Pancreas (tissue), 10 donors: ENCODE measurements at regions of chr16 and their contacts with region 1.

Region 1: DNA sequence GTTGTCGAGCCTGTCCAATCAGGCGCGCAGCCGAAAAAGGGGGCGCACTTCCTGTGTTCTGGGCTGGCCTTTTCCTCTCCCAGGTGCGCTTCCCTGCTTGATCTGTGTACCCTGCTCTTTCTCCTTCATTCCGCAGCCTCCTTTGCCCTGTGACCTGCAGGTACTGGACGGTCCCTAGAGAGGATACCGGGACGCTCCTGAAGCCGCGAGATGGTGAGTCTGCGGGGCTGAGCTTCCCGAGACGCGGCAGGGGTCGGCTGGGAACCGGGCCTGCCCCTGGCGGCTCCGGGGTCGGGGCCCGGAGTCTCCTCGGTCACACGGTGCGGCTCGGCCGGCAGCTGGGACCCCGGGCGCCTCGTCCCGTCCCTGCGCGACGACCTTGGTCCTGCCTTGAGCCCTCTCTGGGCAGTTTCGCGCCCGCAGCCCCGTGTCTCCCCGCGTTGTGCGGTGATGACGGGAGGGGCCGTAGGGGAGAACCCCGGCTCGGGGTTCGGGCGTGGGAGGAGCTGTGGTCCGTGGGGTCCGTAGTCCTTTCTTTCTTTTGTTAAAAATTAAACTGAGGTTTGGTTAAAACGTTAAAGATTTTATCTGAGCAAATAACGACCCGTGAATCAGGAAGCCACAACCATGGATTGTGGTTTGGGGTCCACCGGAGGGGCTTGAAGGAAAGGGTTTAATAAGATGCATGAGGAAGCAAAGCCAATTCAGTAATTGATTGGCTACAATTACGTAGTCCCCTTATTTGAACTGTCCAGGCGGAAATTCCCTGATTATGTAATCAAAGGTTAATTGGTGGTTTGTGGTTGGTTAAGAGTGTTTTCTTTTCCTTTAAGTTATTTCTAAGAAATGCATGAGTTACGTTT is 172.8 kb upstream of the ZNF267 start:
- DNase-seq: peak; percentile 84 to 92 (median 88)
- ATAC-seq: peak; percentile 96 to 99 (median 99)
- H3K4me3 ChIP-seq: peak overlapping the region; percentile 72 to 96 (median 81)
- H3K27ac ChIP-seq: peak overlapping the region; percentile 47 to 79 (median 66)
- H3K4me1 ChIP-seq: peaks cover 0 to 8% (median 7%) of the 10 kb centered on the region in 3 donors
- H3K27me3 ChIP-seq: no peaks in the 10 kb centered on the region
- CTCF ChIP-seq: no peak

Region 2: GRCh38 chr16:31458844-31459721 is 241.7 kb before region 1 on chr16 and contains the start of gene ARMC5:
- intact Hi-C with region 1: no loop called
- DNase-seq: peak; percentile 94 to 99 (median 98)
- ATAC-seq: peak; percentile 83 to 91 (median 85)
- H3K4me3 ChIP-seq: peak within 1 kb of the TSS; percentile 75 to 77 (median 75)
- H3K27ac ChIP-seq: peak within 1 kb of the TSS; percentile 100
- H3K4me1 ChIP-seq: peaks cover 14 to 38% (median 22%) of the 10 kb centered on the region in 3 donors
- H3K27me3 ChIP-seq: no peaks in the 10 kb centered on the region
- CTCF ChIP-seq: peak in 3 of 4 donors; percentile 21 to 24 (median 22)
- total RNA-seq, gene ARMC5: 2.3 to 6.2 (median 4.3) TPM

Region 3: DNA sequence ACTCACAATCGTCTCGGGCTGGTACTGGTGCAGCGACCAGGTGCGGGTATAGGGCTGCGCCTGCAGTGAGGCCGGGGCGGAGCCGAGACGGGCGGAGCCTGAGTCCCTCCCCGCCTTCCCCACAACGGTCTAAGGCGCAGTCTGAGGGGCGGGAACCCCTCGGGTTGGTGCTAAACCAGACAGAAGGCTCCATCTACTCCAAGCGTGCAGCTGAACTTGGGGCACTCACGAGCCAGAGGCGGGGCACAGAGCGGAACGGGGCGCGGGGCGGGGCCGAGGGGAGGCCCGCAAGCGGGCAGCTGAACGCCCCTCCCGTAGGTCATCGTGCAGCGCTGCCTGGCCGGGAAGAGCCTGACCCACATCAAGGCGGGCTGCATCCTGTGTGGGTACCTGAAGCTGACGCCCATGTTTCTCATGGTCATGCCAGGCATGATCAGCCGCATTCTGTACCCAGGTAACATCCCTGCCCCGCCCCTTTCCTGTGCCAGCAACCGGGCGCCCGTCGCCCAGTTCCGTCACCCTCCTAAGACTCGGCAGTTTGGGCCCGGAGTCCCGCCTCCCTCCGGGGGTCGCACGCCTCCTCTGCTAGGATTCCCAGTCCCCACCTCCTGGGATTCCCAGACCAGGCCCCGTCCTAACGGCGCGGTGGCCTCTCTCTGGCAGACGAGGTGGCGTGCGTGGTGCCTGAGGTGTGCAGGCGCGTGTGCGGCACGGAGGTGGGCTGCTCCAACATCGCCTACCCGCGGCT is 212.9 kb before region 1 on chr16:
- intact Hi-C with region 1: loop called in 1 of 3 experiments (anchors 10 kb)
- DNase-seq: peak; percentile 47 to 89 (median 68)
- ATAC-seq: peak; percentile 68 to 86 (median 84)
- H3K4me3 ChIP-seq: peak overlapping the region; percentile 29 to 75 (median 43)
- H3K27ac ChIP-seq: peak overlapping the region in 1 of 4 donors; percentile 8
- H3K4me1 ChIP-seq: peaks cover 5 to 11% (median 7%) of the 10 kb centered on the region in 3 donors
- H3K27me3 ChIP-seq: no peaks in the 10 kb centered on the region
- CTCF ChIP-seq: no peak

Region 4: GRCh38 chr16:31641279-31641678 is 59.5 kb before region 1 on chr16:
- intact Hi-C with region 1: no loop called
- DNase-seq: no peak
- ATAC-seq: no peak
- H3K4me3 ChIP-seq: no peak overlapping the region
- H3K27ac ChIP-seq: no peak overlapping the region
- H3K4me1 ChIP-seq: no peaks in the 10 kb centered on the region
- H3K27me3 ChIP-seq: peaks cover 0 to 13% (median 0%) of the 10 kb centered on the region in 4 donors
- CTCF ChIP-seq: no peak

Region 5: DNA sequence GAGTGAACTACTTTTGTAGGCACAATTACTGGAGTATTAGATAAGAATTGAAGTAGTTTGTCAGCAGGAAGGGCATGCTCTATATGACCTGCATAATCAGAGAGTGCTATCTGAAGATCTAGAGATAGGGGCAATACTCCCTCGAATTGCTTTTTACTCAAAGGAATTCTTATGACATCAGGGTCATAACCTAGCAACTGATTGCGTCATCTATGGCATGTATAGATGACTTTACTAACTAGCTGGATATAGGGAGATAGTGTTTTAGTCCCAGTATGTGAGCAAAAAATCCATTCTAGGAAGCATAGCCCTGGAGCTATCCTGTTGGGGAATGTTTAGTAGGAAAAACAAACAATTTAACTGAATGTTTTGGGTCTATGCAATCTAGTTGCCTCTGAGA is 63.3 kb after region 1 on chr16:
- intact Hi-C with region 1: no loop called
- DNase-seq: no peak
- ATAC-seq: no peak
- H3K4me3 ChIP-seq: no peak overlapping the region
- H3K27ac ChIP-seq: no peak overlapping the region
- H3K4me1 ChIP-seq: no peaks in the 10 kb centered on the region
- H3K27me3 ChIP-seq: no peaks in the 10 kb centered on the region
- CTCF ChIP-seq: no peak

Region 6: GRCh38 chr16:31873556-31874365 is 173.0 kb after region 1 on chr16 and contains the start of gene ZNF267:
- intact Hi-C with region 1: no loop called
- DNase-seq: peak; percentile 89 to 96 (median 94)
- ATAC-seq: peak; percentile 92 to 98 (median 96)
- H3K4me3 ChIP-seq: peak within 1 kb of the TSS; percentile 79 to 100 (median 98)
- H3K27ac ChIP-seq: peak within 1 kb of the TSS; percentile 69 to 96 (median 87)
- H3K4me1 ChIP-seq: peaks cover 0 to 42% (median 9%) of the 10 kb centered on the region in 3 donors
- H3K27me3 ChIP-seq: no peaks in the 10 kb centered on the region
- CTCF ChIP-seq: no peak
- total RNA-seq, gene ZNF267: 3.6 to 13.8 (median 6.0) TPM